ENCODE measurements at regions of chr3 and their contacts with region 1.

Region 1: DNA sequence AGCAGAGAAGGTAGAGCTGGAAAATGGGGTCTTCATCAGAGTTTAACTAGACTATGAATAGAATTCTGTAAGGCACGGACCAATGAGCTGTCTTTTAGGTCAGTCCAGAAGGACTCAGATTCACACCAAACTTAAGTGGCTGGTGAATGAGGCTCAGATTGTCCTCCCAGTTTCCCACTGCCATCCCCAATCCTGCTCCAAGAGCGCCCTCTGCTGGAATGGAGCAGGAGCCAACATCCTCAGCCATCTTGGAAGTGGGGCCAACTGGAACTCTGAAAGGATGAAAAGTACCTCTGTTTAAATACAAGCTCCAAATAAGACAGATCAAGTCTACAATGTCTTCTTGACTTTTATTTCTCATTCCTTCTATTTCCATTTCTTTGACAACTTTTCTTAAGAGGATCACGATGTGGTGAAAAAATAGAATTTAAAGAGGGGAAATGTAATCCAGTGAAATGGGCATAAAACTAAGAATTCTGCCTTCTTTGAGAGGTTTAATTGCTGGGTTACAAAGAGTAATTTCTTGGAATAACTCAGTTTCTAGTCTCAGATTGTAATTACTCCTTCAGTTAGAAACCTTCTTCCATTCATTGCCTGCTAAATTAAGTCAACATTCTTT is 217.1 kb upstream of the TPRG1 start:
- DNase-seq: peak; percentile 52
- H3K4me3 ChIP-seq: peak overlapping the region in 1 of 2 experiments; percentile 26; a peak in 1 of 4 replicates
- H3K27ac ChIP-seq: peak overlapping the region in 1 of 2 experiments; percentile 14; a peak in 1 of 4 replicates
- H3K4me1 ChIP-seq: peaks cover 2 to 13% of the 10 kb centered on the region in 2 experiments; a peak in 3 of 4 replicates
- H3K27me3 ChIP-seq: no peaks in the 10 kb centered on the region
- CTCF ChIP-seq: peak; percentile 97
- EP300 ChIP-seq: no peak
- RAD21 ChIP-seq: peak; percentile 88

Region 2: DNA sequence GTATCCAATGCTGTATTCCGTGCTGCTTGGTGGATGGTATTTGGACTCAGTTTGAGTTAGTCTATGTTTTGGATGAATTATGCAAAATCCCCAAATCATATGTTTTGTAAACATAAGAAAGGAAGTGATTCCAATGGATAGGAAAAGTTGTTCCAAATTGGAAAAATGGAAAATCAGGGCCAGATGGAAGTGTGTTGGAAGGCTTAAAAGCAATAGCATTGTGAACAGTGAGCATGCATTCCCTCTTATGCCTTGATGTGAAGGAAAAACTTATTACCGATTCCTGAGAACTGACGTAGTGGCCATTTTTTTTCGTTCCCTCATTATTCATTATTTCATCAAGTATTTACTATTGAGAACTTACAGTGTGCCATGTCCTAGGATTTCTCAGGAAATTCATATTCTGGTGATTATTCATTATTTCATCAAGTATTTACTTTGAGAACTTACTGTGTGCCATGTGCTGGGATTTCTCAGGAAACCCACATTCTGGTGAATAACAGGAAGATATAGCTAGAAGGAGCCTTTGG is 73.0 kb after region 1 on chr3:
- CTCF ChIA-PET with region 1: no interaction called
- POLR2A ChIA-PET with region 1: no interaction called
- DNase-seq: no peak
- H3K4me3 ChIP-seq: no peak overlapping the region
- H3K27ac ChIP-seq: no peak overlapping the region
- H3K4me1 ChIP-seq: no peaks in the 10 kb centered on the region; a peak in 1 of 4 replicates
- H3K27me3 ChIP-seq: no peaks in the 10 kb centered on the region
- CTCF ChIP-seq: no peak
- EP300 ChIP-seq: no peak
- RAD21 ChIP-seq: no peak

Region 3: DNA sequence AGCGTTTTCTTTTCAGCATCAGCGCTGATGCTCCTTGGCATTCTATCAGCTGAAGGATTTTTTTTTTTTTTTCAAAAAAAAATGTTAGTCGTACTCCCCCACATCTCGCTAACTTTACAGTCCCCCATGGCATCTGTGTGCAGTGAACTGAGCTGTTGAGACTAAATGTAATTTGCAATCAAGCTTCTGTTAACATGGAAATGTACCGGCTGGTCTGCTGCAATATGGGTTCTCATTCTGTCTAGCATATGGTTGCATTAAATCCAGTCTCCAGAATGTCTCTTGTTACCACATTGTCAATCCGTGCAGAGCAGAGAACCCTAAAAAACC is 184.9 kb after region 1 on chr3:
- CTCF ChIA-PET with region 1: interaction called, 23 read pairs
- POLR2A ChIA-PET with region 1: interaction called, 3 read pairs
- DNase-seq: no peak
- H3K4me3 ChIP-seq: no peak overlapping the region
- H3K27ac ChIP-seq: no peak overlapping the region; a peak in 1 of 4 replicates
- H3K4me1 ChIP-seq: peaks cover 0 to 10% of the 10 kb centered on the region in 2 experiments; a peak in 1 of 4 replicates
- H3K27me3 ChIP-seq: peaks cover 10% of the 10 kb centered on the region; the same call in 1 of the 2 replicates
- CTCF ChIP-seq: no peak
- EP300 ChIP-seq: no peak
- RAD21 ChIP-seq: no peak